Sigmoid colon (tissue), 7 donors: ENCODE measurements at regions of chr18 and their contacts with region 1.

Region 1: DNA sequence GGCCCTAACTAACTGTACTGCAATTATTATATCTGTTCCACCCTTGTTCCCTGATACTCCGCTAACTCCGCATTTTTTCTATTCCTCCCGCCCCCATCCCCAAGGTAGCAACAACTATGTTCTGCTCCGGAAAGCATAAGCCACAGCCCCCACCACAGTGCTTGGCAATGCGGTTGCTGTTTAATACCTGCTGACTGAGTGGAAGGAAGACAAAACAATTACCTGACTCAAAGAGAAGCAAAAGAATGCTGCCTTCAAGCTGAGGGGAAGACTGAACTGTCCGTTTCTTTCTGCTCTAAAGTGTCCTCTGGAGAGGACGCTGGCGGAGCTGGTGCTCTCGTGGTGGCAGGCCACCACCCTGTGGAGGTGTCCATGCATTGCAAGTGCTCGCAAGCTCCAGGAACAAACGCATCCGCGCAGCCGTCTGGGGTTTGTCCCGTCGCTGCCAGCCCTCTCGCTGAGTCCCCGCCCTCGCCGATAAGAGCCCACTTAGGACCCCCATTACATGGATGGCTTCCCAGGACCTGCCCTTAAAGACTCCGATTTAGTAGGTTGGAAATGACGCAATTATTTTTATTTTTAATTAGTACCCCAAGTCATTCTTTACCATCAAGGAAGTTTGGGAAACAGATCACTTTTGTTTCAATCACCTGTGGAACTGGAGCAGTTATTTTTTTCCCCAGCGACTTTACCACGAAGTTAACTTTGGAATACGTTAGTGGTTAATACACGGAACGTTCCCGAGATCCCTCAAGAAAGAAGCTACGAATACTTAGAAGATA is 1.6 kb upstream of the MYL12A start:
- DNase-seq: peak; percentile 95
- H3K4me3 ChIP-seq: peak overlapping the region; percentile 98 to 100 (median 99)
- H3K27ac ChIP-seq: peak overlapping the region; percentile 100
- H3K4me1 ChIP-seq: peaks cover 0 to 34% (median 25%) of the 10 kb centered on the region in 4 donors
- H3K27me3 ChIP-seq: no peaks in the 10 kb centered on the region
- CTCF ChIP-seq: peak; percentile 86 to 95 (median 93)
- EP300 ChIP-seq: no peak
- POLR2A ChIP-seq: no peak

Region 2: GRCh38 chr18:2655178-2655953 is 590.7 kb before region 1 on chr18 and contains the start of gene SMCHD1:
- intact Hi-C with region 1: loop called (anchors 5 kb)
- DNase-seq: peak; percentile 93
- H3K4me3 ChIP-seq: peak within 1 kb of the TSS; percentile 71 to 97 (median 94)
- H3K27ac ChIP-seq: peak within 1 kb of the TSS; percentile 95 to 99 (median 98)
- H3K4me1 ChIP-seq: peaks cover 0 to 37% (median 29%) of the 10 kb centered on the region in 4 donors
- H3K27me3 ChIP-seq: no peaks in the 10 kb centered on the region
- CTCF ChIP-seq: no peak
- EP300 ChIP-seq: no peak
- POLR2A ChIP-seq: peak; percentile 45 to 82
- total RNA-seq, gene SMCHD1: 69.9 to 101 (median 82.4) TPM

Region 3: DNA sequence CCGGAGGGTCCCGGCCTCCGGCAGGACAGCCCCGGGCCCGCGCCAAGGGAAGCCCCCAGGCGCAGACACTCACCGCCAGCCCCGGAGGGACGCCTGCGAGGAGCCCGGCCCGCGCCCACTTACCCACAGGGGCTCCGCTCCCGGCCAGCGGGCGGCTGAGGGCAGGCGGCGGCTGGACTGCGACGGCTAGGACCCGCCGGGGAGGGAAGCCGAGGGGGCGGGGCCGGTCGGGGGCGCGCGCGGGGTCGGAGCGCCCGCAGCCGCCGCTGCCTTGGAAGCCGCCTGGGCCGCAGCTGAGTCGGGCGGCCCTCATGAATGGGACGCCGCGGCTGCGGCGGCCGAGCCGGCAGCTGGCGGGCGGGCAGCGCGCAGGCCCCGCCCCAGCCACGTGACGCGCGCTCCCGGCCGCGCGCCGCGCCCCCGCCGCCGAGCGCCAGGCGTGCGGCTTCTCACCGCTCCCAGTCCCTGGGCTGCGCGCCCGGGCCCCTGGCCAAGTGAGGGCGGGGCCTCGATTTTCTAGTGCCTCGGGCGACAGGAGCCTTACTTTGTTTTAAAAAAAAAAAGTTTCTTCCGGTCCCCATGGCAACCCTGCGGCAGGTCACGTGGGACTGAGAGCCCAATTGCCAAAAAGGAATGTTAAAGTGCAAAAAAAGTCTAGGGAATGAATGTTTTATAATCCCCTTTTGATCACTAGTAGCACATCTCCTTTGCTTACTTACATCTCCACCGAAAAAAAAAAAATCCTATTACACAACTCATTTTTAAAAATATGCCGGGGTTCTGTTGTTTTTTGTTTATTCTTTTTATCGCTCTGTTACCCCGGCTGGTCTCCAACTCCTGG is 232.9 kb before region 1 on chr18 and contains the start of gene LPIN2:
- intact Hi-C with region 1: loop called (anchors 5 kb)
- DNase-seq: peak; percentile 99
- H3K4me3 ChIP-seq: peak within 1 kb of the TSS; percentile 75 to 100 (median 88)
- H3K27ac ChIP-seq: peak within 1 kb of the TSS; percentile 91 to 99 (median 98)
- H3K4me1 ChIP-seq: peaks cover 0 to 54% (median 33%) of the 10 kb centered on the region in 4 donors
- H3K27me3 ChIP-seq: no peaks in the 10 kb centered on the region
- CTCF ChIP-seq: no peak
- EP300 ChIP-seq: no peak
- POLR2A ChIP-seq: no peak
- total RNA-seq, gene LPIN2: 13.6 to 31.5 (median 18.0) TPM

Region 4: DNA sequence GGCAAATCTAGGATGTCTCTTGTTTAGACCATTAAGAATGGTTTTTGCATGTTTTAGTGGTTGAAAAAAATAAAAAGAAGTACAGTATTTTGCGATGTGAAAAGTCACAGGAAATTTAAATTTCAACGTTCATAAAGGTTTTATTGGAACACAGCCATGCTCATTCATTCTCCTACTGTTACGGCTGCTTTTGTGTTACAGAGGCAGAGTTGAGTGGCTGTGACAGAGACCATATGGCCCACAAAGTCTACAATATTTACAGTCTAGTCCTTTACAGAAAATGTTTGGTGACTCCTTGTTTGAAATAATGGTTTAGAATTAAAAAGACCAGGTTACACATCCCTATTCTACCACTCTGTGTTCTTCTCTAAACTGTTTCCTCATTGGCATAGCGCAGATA is 74.4 kb before region 1 on chr18:
- intact Hi-C with region 1: loop called (anchors 5 kb)
- DNase-seq: no peak
- H3K4me3 ChIP-seq: no peak overlapping the region
- H3K27ac ChIP-seq: peak overlapping the region in 2 of 4 donors; percentile 25 to 30
- H3K4me1 ChIP-seq: peaks cover 0 to 15% (median 7%) of the 10 kb centered on the region in 4 donors
- H3K27me3 ChIP-seq: no peaks in the 10 kb centered on the region
- CTCF ChIP-seq: no peak
- EP300 ChIP-seq: no peak
- POLR2A ChIP-seq: no peak

Region 5: GRCh38 chr18:3217948-3218647 is 27.9 kb before region 1 on chr18:
- intact Hi-C with region 1: loop called (anchors 2 kb)
- DNase-seq: no peak
- H3K4me3 ChIP-seq: peak overlapping the region in 3 of 4 donors; percentile 32 to 48 (median 38)
- H3K27ac ChIP-seq: peak overlapping the region; percentile 76 to 85 (median 82)
- H3K4me1 ChIP-seq: peaks cover 0 to 26% (median 8%) of the 10 kb centered on the region in 4 donors
- H3K27me3 ChIP-seq: no peaks in the 10 kb centered on the region
- CTCF ChIP-seq: no peak
- EP300 ChIP-seq: no peak
- POLR2A ChIP-seq: no peak